OCI-LY7 (cell line): ENCODE measurements at regions of chr10 and their contacts with region 1.

Region 1: DNA sequence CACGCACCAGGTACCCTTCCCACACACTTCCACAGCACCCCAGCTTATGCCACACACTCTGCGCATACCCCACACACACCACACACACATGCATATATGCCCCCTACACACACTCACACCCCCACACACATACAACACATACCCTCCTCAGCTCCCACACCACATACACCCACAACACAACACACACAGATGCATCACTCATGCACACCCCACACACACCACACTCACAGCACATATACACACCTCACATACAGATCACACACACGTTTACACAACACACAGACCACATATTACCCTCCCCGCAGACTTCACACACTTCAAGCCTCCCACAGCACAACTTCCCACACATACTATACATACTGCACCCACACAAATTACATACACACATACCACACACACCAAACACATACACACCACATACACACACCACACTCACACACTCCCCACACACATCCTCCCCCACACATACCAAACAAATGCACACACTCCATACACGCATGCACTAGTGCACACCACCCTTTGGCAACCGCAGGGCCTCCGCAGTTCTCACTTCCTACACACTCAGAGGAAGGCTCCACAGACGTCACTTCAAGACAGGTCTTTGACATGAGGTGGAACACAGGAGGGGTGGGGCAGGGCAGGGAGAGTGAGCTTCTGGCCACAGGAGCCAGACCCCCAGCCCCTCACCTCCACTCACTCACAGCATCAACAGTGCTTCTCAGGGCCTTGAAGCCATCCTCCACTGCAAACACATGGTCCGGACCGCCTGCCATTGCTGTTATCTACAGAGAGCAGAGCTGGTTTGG is 18.5 kb upstream of the ANTXRL start:
- DNase-seq: peak; percentile 81
- H3K4me3 ChIP-seq: peak overlapping the region; percentile 78
- H3K27ac ChIP-seq: peak overlapping the region; percentile 96
- H3K4me1 ChIP-seq: peaks cover 71% of the 10 kb centered on the region
- CTCF ChIP-seq: no peak

Region 2: GRCh38 chr10:46092524-46093081 is 175.7 kb before region 1 on chr10:
- CTCF ChIA-PET with region 1: no interaction called
- POLR2A ChIA-PET with region 1: interaction called, 9 read pairs
- intact Hi-C with region 1: loop called (anchors 10 kb)
- DNase-seq: peak; percentile 85
- H3K4me3 ChIP-seq: peak overlapping the region; percentile 31
- H3K27ac ChIP-seq: peak overlapping the region; percentile 74
- H3K4me1 ChIP-seq: peaks cover 78% of the 10 kb centered on the region
- CTCF ChIP-seq: no peak

Region 3: DNA sequence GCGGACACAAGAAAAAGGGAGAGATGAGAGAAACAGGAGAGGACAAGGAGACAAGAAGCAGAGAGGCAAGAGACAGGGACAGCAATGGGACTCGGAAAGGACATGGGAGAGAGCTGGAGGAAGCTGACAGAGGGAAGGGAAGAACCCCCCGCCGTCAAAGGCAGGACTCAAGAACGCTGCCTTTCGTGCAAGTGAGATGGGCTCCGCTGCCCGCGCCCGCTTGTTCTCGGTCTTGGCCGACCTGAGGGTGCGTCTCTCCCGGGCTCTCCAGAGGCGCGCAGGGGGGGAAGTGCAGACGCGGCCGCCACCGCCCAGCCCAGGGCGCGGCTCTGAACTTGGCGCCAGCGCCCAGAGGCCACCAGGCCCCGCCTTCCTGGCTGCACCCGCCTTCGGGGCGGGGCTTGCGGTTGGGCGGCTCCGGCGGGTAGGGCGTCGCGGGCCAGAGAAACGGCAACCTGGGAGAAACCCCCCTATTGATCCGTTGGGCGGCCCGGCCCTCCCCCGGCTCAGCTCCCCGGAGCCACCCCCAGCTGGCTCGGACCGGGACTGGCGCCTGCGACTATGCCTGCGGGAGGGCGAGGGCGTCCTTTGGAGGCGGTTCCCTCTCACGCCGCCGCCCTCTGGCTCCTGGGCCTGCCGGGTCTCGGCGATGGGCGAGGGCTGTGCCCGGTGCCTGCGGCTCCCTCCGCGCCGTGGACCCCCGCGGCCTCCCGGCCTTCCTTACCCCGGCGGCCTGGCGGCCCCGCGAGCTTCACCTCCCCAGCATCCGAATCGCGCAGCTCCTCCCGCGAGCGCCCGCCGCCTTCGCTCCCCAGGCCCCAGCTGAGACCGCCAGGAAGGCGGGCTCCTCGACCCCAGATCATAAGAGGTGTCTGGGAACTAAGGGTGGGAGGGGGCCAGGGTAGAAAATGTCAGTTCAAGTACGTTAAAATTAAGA is 16.3 kb after region 1 on chr10:
- CTCF ChIA-PET with region 1: no interaction called
- POLR2A ChIA-PET with region 1: interaction called, 10 read pairs
- intact Hi-C with region 1: loop called (anchors 1 kb)
- DNase-seq: peak; percentile 89
- H3K4me3 ChIP-seq: peak overlapping the region; percentile 71
- H3K27ac ChIP-seq: peak overlapping the region; percentile 39
- H3K4me1 ChIP-seq: peaks cover 27% of the 10 kb centered on the region
- CTCF ChIP-seq: no peak

Region 4: GRCh38 chr10:46299536-46300369 is 31.5 kb after region 1 on chr10:
- CTCF ChIA-PET with region 1: interaction called, 5 read pairs
- POLR2A ChIA-PET with region 1: interaction called, 14 read pairs
- intact Hi-C with region 1: loop called (anchors 1 kb)
- DNase-seq: peak; percentile 84
- H3K4me3 ChIP-seq: no peak overlapping the region
- H3K27ac ChIP-seq: peak overlapping the region; percentile 67
- H3K4me1 ChIP-seq: peaks cover 49% of the 10 kb centered on the region
- CTCF ChIP-seq: no peak